CD4-positive, alpha-beta memory T cell (primary cell): ENCODE measurements at regions of chr2 and their contacts with region 1.

Region 1: DNA sequence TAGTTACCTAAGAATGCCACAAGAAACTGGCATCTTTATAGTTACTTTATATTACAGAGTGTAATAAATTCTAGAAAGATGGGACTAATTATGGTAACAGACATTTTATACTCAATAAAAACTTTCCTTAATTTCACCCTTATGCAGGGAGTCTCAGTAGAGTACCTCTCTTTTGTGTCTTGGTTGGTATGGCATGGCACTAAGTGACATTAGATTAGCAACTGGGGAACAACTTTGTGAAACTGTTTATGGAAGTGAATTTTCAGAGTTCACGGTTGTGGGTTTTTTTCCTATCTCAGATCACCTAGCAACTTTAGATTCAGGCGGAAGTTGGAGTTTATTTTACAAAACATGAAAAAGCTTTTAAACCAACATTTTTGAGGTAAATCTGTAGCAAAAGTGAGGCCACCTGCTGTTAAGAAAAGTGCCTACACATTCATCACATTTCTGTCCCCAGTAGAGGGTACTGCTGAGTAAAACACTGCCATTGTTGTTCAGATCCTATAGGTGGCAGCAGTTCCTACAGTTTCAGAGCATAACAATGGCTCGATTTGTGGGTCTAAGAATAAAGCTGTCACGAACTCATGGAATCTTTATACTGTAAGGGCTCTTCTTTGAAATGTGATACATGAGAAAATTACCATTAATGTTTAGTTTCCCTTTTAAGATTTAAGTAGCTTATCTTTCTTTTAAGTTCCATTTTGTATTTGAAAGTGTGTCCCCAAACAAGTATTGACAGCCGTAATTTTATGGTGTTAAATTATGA is 117.6 kb downstream of the CAMKMT start:
- DNase-seq: peak; percentile 49 to 73 (median 64)
- H3K4me3 ChIP-seq: no peak overlapping the region
- H3K4me3 Mint-ChIP-seq: no peak overlapping the region
- H3K27ac ChIP-seq: no peak overlapping the region
- H3K27ac Mint-ChIP-seq: peak overlapping the region in 1 of 7 donors; percentile 8
- H3K4me1 ChIP-seq: no peaks in the 10 kb centered on the region
- H3K4me1 Mint-ChIP-seq: peaks cover 4 to 8% (median 6%) of the 10 kb centered on the region in 4 donors
- H3K27me3 ChIP-seq: no peaks in the 10 kb centered on the region
- H3K27me3 Mint-ChIP-seq: no peaks in the 10 kb centered on the region

Region 2: GRCh38 chr2:44044281-44044720 is 435.0 kb before region 1 on chr2:
- CTCF ChIA-PET with region 1: interaction called, 10 read pairs
- POLR2A ChIA-PET with region 1: no interaction called
- intact Hi-C with region 1: no loop called
- DNase-seq: peak; percentile 60 to 68 (median 66)
- H3K4me3 ChIP-seq: no peak overlapping the region
- H3K4me3 Mint-ChIP-seq: peak overlapping the region in 1 of 8 donors; percentile 38
- H3K27ac ChIP-seq: no peak overlapping the region
- H3K27ac Mint-ChIP-seq: peak overlapping the region in 1 of 7 donors; percentile 14
- H3K4me1 ChIP-seq: peaks cover 6% of the 10 kb centered on the region
- H3K4me1 Mint-ChIP-seq: peaks cover 0 to 4% (median 2%) of the 10 kb centered on the region in 4 donors
- H3K27me3 ChIP-seq: no peaks in the 10 kb centered on the region
- H3K27me3 Mint-ChIP-seq: peaks cover 0 to 2% of the 10 kb centered on the region in 2 donors

Region 3: DNA sequence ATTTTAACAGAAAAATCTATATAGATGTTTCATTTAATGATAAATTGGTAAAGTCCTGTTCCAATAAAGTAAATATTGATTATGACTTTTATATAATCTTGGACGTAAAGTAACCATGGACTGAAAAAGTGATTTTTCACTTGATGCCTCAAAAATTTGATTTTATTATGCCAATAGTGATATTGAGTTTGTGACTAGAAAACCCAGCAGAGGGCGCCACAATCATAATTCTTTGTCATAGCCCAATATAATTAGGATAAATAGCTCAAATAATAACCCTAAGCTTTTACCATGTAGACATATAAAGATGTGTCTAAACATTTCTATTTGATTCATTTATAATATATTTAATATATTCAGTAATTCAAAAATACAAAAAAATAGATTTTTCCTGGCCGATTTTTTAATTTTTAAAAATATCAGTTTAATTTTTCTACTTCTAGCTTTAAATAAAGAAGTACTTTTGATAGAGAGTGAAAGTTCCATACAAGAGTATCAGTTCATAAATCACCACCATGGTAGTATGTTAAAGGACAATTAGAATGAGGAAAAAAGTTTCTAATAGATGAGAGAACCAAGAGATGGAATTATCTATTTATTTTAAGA is 86.9 kb before region 1 on chr2:
- CTCF ChIA-PET with region 1: interaction called, 7 read pairs
- POLR2A ChIA-PET with region 1: no interaction called
- intact Hi-C with region 1: loop called (anchors 5 kb)
- DNase-seq: peak; percentile 3 to 30 (median 21)
- H3K4me3 ChIP-seq: no peak overlapping the region
- H3K4me3 Mint-ChIP-seq: no peak overlapping the region
- H3K27ac ChIP-seq: no peak overlapping the region
- H3K27ac Mint-ChIP-seq: no peak overlapping the region
- H3K4me1 ChIP-seq: no peaks in the 10 kb centered on the region
- H3K4me1 Mint-ChIP-seq: peaks cover 4 to 10% (median 6%) of the 10 kb centered on the region in 4 donors
- H3K27me3 ChIP-seq: no peaks in the 10 kb centered on the region
- H3K27me3 Mint-ChIP-seq: no peaks in the 10 kb centered on the region

Region 4: GRCh38 chr2:44464437-44464836 is 14.9 kb before region 1 on chr2:
- CTCF ChIA-PET with region 1: interaction called, 45 read pairs
- POLR2A ChIA-PET with region 1: no interaction called
- intact Hi-C with region 1: no loop called
- DNase-seq: no peak
- H3K4me3 ChIP-seq: no peak overlapping the region
- H3K4me3 Mint-ChIP-seq: no peak overlapping the region
- H3K27ac ChIP-seq: no peak overlapping the region
- H3K27ac Mint-ChIP-seq: no peak overlapping the region
- H3K4me1 ChIP-seq: no peaks in the 10 kb centered on the region
- H3K4me1 Mint-ChIP-seq: peaks cover 0 to 1% (median 0%) of the 10 kb centered on the region in 4 donors
- H3K27me3 ChIP-seq: no peaks in the 10 kb centered on the region
- H3K27me3 Mint-ChIP-seq: no peaks in the 10 kb centered on the region

Region 5: DNA sequence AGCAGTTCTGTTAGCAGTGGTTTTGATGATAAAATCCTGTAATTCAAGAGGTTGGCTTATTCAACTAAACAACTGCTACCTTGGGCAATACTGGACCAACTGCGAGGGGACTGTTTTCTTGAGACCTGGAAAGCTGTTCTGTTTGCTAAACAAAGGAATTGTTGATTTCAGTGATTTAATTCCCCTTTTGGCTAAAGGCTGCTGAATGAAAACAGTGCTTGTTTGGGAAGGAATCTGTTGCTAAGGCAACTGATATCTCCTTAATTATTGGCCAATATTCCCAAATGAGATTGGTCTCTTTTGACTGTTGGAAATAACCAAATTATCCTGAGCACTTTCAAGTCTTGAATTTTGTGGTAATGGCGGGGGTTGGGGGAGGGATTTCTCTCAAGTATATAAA is 19.2 kb after region 1 on chr2:
- CTCF ChIA-PET with region 1: interaction called, 17 read pairs
- POLR2A ChIA-PET with region 1: no interaction called
- intact Hi-C with region 1: no loop called
- DNase-seq: no peak
- H3K4me3 ChIP-seq: no peak overlapping the region
- H3K4me3 Mint-ChIP-seq: no peak overlapping the region
- H3K27ac ChIP-seq: no peak overlapping the region
- H3K27ac Mint-ChIP-seq: no peak overlapping the region
- H3K4me1 ChIP-seq: no peaks in the 10 kb centered on the region
- H3K4me1 Mint-ChIP-seq: no peaks in the 10 kb centered on the region
- H3K27me3 ChIP-seq: no peaks in the 10 kb centered on the region
- H3K27me3 Mint-ChIP-seq: no peaks in the 10 kb centered on the region

Region 6: GRCh38 chr2:44596537-44597320 is 117.4 kb after region 1 on chr2:
- CTCF ChIA-PET with region 1: no interaction called
- POLR2A ChIA-PET with region 1: no interaction called
- intact Hi-C with region 1: no loop called
- DNase-seq: no peak
- H3K4me3 ChIP-seq: no peak overlapping the region
- H3K4me3 Mint-ChIP-seq: no peak overlapping the region
- H3K27ac ChIP-seq: no peak overlapping the region
- H3K27ac Mint-ChIP-seq: no peak overlapping the region
- H3K4me1 ChIP-seq: no peaks in the 10 kb centered on the region
- H3K4me1 Mint-ChIP-seq: no peaks in the 10 kb centered on the region
- H3K27me3 ChIP-seq: no peaks in the 10 kb centered on the region
- H3K27me3 Mint-ChIP-seq: no peaks in the 10 kb centered on the region

Region 7: GRCh38 chr2:44618251-44619023 is 139.1 kb after region 1 on chr2:
- CTCF ChIA-PET with region 1: no interaction called
- POLR2A ChIA-PET with region 1: no interaction called
- intact Hi-C with region 1: no loop called
- DNase-seq: no peak
- H3K4me3 ChIP-seq: no peak overlapping the region
- H3K4me3 Mint-ChIP-seq: no peak overlapping the region
- H3K27ac ChIP-seq: no peak overlapping the region
- H3K27ac Mint-ChIP-seq: no peak overlapping the region
- H3K4me1 ChIP-seq: peaks cover 26% of the 10 kb centered on the region
- H3K4me1 Mint-ChIP-seq: peaks cover 0 to 10% (median 8%) of the 10 kb centered on the region in 4 donors
- H3K27me3 ChIP-seq: no peaks in the 10 kb centered on the region
- H3K27me3 Mint-ChIP-seq: no peaks in the 10 kb centered on the region